ENCODE measurements at regions of chr2 and their contacts with region 1.

Region 1: GRCh38 chr2:128305159-128306087 is 13.2 kb downstream of the HS6ST1 start:
- DNase-seq: peak; percentile 99
- H3K4me3 ChIP-seq: peak overlapping the region; percentile 18 to 47 (median 25)
- H3K27ac ChIP-seq: peak overlapping the region; percentile 95
- H3K4me1 ChIP-seq: peaks cover 59% of the 10 kb centered on the region
- H3K27me3 ChIP-seq: no peaks in the 10 kb centered on the region
- CTCF ChIP-seq: peak in 1 of 2 donors; percentile 12

Region 2: GRCh38 chr2:126571403-126571802 is 1734.0 kb before region 1 on chr2:
- CTCF ChIA-PET with region 1: no interaction called
- dilution Hi-C with region 1: no loop called
- in situ Hi-C with region 1: no loop called
- intact Hi-C with region 1: no loop called
- DNase-seq: no peak
- H3K4me3 ChIP-seq: no peak overlapping the region
- H3K27ac ChIP-seq: no peak overlapping the region
- H3K4me1 ChIP-seq: no peaks in the 10 kb centered on the region
- H3K27me3 ChIP-seq: no peaks in the 10 kb centered on the region
- CTCF ChIP-seq: no peak

Region 3: DNA sequence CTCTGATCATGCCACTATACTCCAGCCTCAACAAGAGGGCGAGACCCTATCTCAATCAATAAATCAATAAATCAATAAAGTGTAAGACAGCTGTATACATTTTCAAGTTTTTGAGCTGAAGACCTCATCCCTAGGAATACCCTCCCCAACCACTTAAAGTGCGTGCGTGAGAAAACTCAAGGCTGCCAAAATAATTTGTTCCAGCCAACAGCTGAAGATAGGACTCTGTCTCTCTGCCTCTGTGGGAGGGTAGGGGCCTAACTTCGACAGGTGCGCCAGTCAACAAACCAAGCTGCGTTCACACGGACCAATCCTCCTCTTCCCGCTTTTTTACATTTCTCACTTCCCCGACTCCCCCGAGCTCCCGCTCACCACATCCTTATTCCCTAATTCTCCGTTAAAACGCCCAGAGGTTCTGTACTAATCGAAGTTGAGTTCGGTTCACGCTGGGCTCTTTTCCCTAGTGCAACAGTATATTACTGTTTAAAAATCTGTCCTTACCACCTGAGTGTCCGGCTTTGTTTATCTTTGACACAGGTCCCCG is 448.1 kb before region 1 on chr2:
- CTCF ChIA-PET with region 1: no interaction called
- dilution Hi-C with region 1: no loop called
- in situ Hi-C with region 1: no loop called
- intact Hi-C with region 1: loop called (anchors 10 kb)
- DNase-seq: peak; percentile 20
- H3K4me3 ChIP-seq: peak overlapping the region; percentile 79 to 98 (median 97)
- H3K27ac ChIP-seq: peak overlapping the region; percentile 54
- H3K4me1 ChIP-seq: peaks cover 13% of the 10 kb centered on the region
- H3K27me3 ChIP-seq: no peaks in the 10 kb centered on the region
- CTCF ChIP-seq: no peak

Region 4: GRCh38 chr2:128062571-128062970 is 242.9 kb before region 1 on chr2:
- CTCF ChIA-PET with region 1: no interaction called
- dilution Hi-C with region 1: no loop called
- in situ Hi-C with region 1: no loop called
- intact Hi-C with region 1: loop called (anchors 1 kb)
- DNase-seq: no peak
- H3K4me3 ChIP-seq: no peak overlapping the region
- H3K27ac ChIP-seq: no peak overlapping the region
- H3K4me1 ChIP-seq: no peaks in the 10 kb centered on the region
- H3K27me3 ChIP-seq: no peaks in the 10 kb centered on the region
- CTCF ChIP-seq: no peak

Region 5: DNA sequence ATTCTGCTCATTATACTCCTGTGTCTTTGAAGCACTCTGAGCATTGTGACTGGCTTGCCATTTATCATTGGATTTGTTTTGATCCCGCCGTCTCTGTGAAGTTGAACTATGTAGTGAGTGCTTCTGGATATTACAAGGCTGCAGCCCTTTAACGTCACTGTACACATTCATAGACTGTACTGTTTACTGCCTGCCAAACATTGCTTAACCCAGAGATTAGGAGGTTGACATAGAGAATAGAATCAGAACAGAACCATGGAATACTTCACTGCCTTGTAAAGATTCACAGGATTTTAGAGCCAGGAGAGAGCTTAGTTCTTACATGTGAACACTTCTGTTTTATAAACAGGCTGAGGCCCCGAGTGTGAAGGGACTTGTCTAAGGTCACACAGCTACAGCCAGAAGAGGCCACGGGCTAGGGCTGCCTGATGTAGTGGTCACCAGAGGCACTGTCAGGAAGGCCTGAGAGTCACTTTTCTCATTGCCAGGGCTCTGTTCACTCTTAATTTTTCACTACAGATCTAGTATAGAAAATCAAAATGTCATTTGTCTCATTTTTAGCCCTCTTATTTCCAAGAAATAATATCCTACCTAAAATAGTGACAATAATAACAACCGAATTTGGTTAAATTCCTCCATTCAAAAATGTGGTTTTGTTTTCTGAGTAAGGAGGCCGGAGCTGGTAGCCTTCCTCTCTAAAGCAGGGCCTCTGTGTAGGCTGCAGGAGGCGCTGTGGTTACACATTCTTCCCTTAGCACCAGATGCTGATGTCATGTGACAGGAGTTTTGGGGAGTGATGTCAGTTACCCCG is 126.6 kb before region 1 on chr2:
- CTCF ChIA-PET with region 1: no interaction called
- dilution Hi-C with region 1: no loop called
- in situ Hi-C with region 1: loop called in 1 of 2 experiments (anchors 25 kb)
- intact Hi-C with region 1: loop called (anchors 1 kb)
- DNase-seq: peak; percentile 35
- H3K4me3 ChIP-seq: no peak overlapping the region
- H3K27ac ChIP-seq: no peak overlapping the region
- H3K4me1 ChIP-seq: no peaks in the 10 kb centered on the region
- H3K27me3 ChIP-seq: no peaks in the 10 kb centered on the region
- CTCF ChIP-seq: peak; percentile 86 to 91

Region 6: GRCh38 chr2:128232965-128233789 is 72.2 kb before region 1 on chr2:
- CTCF ChIA-PET with region 1: no interaction called
- dilution Hi-C with region 1: no loop called
- in situ Hi-C with region 1: no loop called
- intact Hi-C with region 1: loop called (anchors 2 kb)
- DNase-seq: peak; percentile 51
- H3K4me3 ChIP-seq: peak overlapping the region; percentile 60 to 86 (median 76)
- H3K27ac ChIP-seq: no peak overlapping the region
- H3K4me1 ChIP-seq: peaks cover 14% of the 10 kb centered on the region
- H3K27me3 ChIP-seq: no peaks in the 10 kb centered on the region
- CTCF ChIP-seq: peak; percentile 69 to 94

Region 7: DNA sequence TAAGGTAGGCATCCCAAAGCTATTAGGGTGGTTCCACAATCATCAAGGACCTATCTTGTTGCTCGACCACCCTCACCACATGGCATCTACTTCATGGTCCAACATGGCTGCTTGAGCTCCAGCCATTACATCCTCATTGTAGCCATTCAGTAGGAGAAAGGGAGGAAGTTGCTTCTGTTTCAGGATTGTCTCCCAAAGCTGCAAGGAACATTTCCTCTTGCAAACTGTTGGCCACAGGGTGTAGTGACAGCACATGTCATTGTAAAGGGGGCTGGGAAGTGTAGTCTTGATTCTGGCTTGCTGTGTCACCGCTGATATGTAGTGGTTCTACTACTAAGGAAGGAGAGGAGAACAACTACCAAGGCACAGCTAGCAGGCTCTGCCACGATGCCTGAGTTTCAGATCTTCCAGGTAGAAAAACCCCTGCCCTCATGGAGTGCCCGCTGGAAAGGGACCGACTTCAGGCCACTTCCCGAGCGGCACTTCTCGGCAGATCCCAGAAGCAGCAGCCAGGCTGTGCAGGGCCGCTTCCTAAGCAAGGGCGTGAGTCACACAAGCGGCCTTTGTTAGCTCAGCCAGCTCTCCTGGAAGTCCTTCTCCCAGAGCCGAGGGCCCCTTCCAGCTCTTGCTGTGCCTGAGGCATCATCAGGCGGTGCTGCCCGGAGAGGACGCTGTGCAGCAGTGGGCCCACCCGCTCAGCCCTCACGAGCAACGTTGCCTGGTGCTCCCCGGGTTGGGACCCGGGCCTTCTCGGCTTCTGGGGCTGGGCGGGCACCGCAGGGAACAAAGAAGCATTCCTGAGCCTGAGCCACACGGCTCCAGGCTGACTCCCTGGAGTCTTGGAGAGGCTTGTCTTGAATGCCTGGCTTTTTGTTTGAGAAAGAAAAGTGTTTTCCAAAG is 44.9 kb before region 1 on chr2:
- CTCF ChIA-PET with region 1: no interaction called
- dilution Hi-C with region 1: no loop called
- in situ Hi-C with region 1: no loop called
- intact Hi-C with region 1: loop called (anchors 1 kb)
- DNase-seq: peak; percentile 76
- H3K4me3 ChIP-seq: peak overlapping the region in 1 of 3 experiments; percentile 18
- H3K27ac ChIP-seq: peak overlapping the region; percentile 34
- H3K4me1 ChIP-seq: peaks cover 20% of the 10 kb centered on the region
- H3K27me3 ChIP-seq: no peaks in the 10 kb centered on the region
- CTCF ChIP-seq: peak; percentile 14 to 50

Region 8: DNA sequence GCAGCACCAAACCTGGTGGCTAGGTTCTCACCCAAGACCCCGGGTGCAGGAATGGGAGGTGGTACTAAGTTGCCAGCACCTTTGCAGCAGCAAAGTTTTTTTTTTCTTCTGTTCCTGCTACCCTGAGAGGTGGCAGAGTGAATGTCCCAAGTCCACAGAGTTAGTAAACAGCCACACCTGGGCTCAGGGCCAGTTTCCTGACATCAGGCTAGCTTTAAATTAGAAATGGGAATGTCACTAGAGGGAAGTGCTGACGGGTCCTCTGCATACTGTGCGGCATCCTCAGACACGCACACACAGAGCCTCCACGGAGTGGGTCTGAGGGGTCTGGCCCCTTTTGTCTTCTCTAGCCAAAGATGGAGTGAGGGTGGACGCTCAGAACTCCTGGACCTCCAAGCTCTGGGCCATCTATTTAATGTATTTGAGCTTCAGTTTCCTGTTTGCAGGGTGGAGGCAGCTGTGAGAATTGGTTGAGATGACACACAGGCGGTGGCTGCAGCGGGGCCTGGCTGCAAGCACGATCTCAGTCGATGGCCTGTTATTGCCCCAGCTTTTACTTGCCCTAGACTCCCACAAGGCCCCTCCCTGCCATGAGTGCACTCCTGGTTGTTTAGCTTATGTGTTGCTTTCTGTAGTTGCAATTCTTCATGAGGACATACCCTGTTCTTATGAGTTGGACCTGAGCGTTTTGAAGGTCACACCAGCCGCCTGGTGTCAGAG is 764.6 kb after region 1 on chr2:
- CTCF ChIA-PET with region 1: no interaction called
- dilution Hi-C with region 1: no loop called
- in situ Hi-C with region 1: no loop called
- intact Hi-C with region 1: loop called (anchors 10 kb)
- DNase-seq: no peak
- H3K4me3 ChIP-seq: no peak overlapping the region
- H3K27ac ChIP-seq: no peak overlapping the region
- H3K4me1 ChIP-seq: peaks cover 7% of the 10 kb centered on the region
- H3K27me3 ChIP-seq: no peaks in the 10 kb centered on the region
- CTCF ChIP-seq: no peak